ENCODE measurements at regions of chr3 and their contacts with region 1.

Region 1: GRCh38 chr3:86969500-86970189 is 21.3 kb downstream of the VGLL3 start:
- DNase-seq: peak; percentile 28
- H3K4me3 Mint-ChIP-seq: no peak overlapping the region
- H3K27ac Mint-ChIP-seq: no peak overlapping the region
- H3K4me1 Mint-ChIP-seq: no peaks in the 10 kb centered on the region
- H3K27me3 Mint-ChIP-seq: no peaks in the 10 kb centered on the region

Region 2: DNA sequence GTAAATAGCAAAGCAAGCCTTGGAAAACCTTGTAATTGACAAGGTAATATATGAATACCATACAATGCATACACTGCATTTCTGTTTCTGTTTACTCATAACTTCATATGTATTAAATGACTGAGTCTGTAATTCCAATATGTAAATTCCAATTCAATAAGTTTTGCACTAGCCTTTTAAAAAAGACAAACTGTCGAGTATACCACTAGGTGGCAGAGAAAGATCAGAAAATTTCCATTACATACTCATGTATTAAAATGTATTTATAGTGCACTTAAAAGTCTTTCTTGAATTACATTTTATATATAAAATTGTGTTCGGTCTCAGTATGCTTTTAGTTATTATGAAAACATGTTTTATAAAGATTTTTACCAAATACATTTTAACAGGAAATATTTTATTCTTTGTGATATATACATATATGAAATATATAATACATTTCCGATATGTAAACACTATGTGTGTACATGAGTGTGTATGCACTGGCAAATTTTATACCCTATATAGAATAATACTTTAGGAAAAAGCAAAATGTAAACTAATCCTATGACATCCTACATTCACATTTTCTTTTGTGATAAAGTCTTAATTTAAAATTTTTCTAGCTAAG is 195.5 kb before region 1 on chr3:
- CTCF ChIA-PET with region 1: no interaction called
- POLR2A ChIA-PET with region 1: no interaction called
- intact Hi-C with region 1: loop called (anchors 10 kb)
- DNase-seq: no peak
- H3K4me3 Mint-ChIP-seq: no peak overlapping the region
- H3K27ac Mint-ChIP-seq: no peak overlapping the region
- H3K4me1 Mint-ChIP-seq: no peaks in the 10 kb centered on the region
- H3K27me3 Mint-ChIP-seq: no peaks in the 10 kb centered on the region

Region 3: DNA sequence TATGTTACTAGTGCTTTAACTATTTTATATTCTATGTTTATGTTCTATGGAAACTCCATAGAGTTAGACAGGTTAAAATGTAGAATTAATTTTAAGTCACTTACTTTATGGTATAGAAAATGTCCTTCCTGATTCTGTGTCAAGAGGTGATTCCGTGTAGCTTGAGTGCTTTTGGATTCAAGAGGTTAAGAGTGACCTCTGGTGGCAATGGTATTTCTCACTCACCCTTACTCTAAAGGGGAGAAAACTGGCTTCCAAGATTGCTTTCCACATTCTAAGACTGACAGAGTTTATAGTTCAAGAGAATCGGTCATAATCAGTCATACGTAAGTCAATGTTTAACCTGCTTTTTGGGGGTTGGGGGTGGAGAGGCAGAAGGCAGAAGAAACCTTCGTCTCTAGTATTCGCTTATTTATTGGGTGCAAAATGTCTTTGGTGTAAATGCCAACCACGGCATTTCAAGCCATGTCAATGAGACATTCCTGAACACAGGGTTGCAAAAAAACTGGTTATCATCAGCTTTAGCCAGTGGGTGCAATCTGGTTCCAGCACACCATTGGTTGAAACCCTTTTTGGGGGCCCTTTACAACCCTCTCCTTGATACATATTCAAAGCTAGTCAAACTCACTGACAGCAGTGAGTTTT is 113.3 kb after region 1 on chr3:
- CTCF ChIA-PET with region 1: no interaction called
- POLR2A ChIA-PET with region 1: no interaction called
- intact Hi-C with region 1: loop called (anchors 2 kb)
- DNase-seq: no peak
- H3K4me3 Mint-ChIP-seq: no peak overlapping the region
- H3K27ac Mint-ChIP-seq: no peak overlapping the region
- H3K4me1 Mint-ChIP-seq: peaks cover 3% of the 10 kb centered on the region
- H3K27me3 Mint-ChIP-seq: no peaks in the 10 kb centered on the region